ENCODE measurements at regions of chr9 and their contacts with region 1.

Region 1: GRCh38 chr9:96020792-96021550 is 145.5 kb downstream of the ERCC6L2 start:
- DNase-seq: peak; percentile 67
- ATAC-seq: peak; percentile 42
- H3K4me3 Mint-ChIP-seq: peak overlapping the region; percentile 82
- H3K27ac Mint-ChIP-seq: peak overlapping the region; percentile 93
- H3K4me1 Mint-ChIP-seq: peaks cover 84% of the 10 kb centered on the region
- H3K27me3 Mint-ChIP-seq: no peaks in the 10 kb centered on the region

Region 2: GRCh38 chr9:96009690-96010472 is 11.1 kb before region 1 on chr9:
- CTCF ChIA-PET with region 1: interaction called, 3 read pairs
- POLR2A ChIA-PET with region 1: interaction called, 13 read pairs
- DNase-seq: peak; percentile 89
- ATAC-seq: peak; percentile 89
- H3K4me3 Mint-ChIP-seq: peak overlapping the region; percentile 39
- H3K27ac Mint-ChIP-seq: peak overlapping the region; percentile 89
- H3K4me1 Mint-ChIP-seq: peaks cover 60% of the 10 kb centered on the region
- H3K27me3 Mint-ChIP-seq: no peaks in the 10 kb centered on the region

Region 3: GRCh38 chr9:96048104-96048955 is 27.4 kb after region 1 on chr9:
- CTCF ChIA-PET with region 1: no interaction called
- POLR2A ChIA-PET with region 1: no interaction called
- DNase-seq: no peak
- ATAC-seq: no peak
- H3K4me3 Mint-ChIP-seq: no peak overlapping the region
- H3K27ac Mint-ChIP-seq: no peak overlapping the region
- H3K4me1 Mint-ChIP-seq: no peaks in the 10 kb centered on the region
- H3K27me3 Mint-ChIP-seq: peaks cover 5% of the 10 kb centered on the region